ENCODE measurements at regions of chr4 and their contacts with region 1.

Region 1: DNA sequence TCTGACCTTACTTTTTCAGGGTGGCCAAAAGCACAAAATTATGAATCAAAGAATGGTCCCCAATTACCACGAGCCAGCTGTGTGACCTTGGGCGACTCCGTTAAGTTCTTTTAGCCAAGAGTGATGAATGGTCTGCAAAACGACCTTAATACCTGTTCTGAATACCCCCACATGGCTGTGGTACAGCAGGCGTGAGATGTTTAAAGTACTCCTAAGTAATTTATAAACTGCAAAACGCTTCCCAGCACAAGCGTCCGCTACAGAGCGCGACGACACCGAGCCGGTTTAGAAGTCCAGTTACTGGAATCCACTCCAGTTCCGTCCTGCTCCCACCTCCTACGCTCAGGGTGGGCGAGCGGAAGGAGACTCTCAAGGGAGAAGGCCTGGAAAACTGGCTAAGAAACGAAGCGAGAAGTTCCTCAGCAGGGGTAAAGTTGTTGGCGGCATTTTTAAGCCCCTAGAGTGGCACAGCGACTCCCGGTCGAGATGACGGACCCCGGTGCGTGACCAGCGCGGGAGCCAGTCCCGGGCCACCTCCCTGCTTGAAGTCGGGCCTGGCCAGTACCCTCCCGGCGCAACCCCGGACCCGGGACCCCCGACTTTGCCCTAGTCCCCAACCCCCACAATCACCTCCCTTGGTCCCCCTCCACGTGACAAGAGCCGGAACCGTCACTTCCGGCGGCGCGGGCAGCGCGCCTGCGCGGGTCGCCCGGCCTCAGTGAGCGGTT is 683 bp upstream of the BMP2K start:
- DNase-seq: peak; percentile 94
- ATAC-seq: peak; percentile 63
- H3K4me3 ChIP-seq: peak overlapping the region; percentile 79 to 99 (median 99)
- H3K4me3 Mint-ChIP-seq: peak overlapping the region; percentile 96
- H3K27ac ChIP-seq: peak overlapping the region; percentile 98 to 100
- H3K27ac Mint-ChIP-seq: peak overlapping the region; percentile 97
- H3K4me1 ChIP-seq: peaks cover 30 to 35% of the 10 kb centered on the region in 2 donors
- H3K4me1 Mint-ChIP-seq: peaks cover 21% of the 10 kb centered on the region
- H3K27me3 ChIP-seq: no peaks in the 10 kb centered on the region
- H3K27me3 Mint-ChIP-seq: no peaks in the 10 kb centered on the region
- CTCF ChIP-seq: no peak

Region 2: GRCh38 chr4:77075869-77076799 is 1699.3 kb before region 1 on chr4 and contains the start of gene CCNI:
- CTCF ChIA-PET with region 1: no interaction called
- POLR2A ChIA-PET with region 1: no interaction called
- intact Hi-C with region 1: loop called (anchors 10 kb)
- DNase-seq: peak; percentile 100
- ATAC-seq: peak; percentile 75
- H3K4me3 ChIP-seq: peak within 1 kb of the TSS; percentile 68 to 98 (median 81)
- H3K4me3 Mint-ChIP-seq: no peak within 1 kb of the TSS
- H3K27ac ChIP-seq: peak within 1 kb of the TSS; percentile 97 to 100
- H3K27ac Mint-ChIP-seq: peak within 1 kb of the TSS; percentile 100
- H3K4me1 ChIP-seq: peaks cover 48 to 52% of the 10 kb centered on the region in 2 donors
- H3K4me1 Mint-ChIP-seq: peaks cover 46% of the 10 kb centered on the region
- H3K27me3 ChIP-seq: no peaks in the 10 kb centered on the region
- H3K27me3 Mint-ChIP-seq: no peaks in the 10 kb centered on the region
- CTCF ChIP-seq: no peak
- total RNA-seq, gene CCNI: 314 and 328 TPM in 2 replicates

Region 3: DNA sequence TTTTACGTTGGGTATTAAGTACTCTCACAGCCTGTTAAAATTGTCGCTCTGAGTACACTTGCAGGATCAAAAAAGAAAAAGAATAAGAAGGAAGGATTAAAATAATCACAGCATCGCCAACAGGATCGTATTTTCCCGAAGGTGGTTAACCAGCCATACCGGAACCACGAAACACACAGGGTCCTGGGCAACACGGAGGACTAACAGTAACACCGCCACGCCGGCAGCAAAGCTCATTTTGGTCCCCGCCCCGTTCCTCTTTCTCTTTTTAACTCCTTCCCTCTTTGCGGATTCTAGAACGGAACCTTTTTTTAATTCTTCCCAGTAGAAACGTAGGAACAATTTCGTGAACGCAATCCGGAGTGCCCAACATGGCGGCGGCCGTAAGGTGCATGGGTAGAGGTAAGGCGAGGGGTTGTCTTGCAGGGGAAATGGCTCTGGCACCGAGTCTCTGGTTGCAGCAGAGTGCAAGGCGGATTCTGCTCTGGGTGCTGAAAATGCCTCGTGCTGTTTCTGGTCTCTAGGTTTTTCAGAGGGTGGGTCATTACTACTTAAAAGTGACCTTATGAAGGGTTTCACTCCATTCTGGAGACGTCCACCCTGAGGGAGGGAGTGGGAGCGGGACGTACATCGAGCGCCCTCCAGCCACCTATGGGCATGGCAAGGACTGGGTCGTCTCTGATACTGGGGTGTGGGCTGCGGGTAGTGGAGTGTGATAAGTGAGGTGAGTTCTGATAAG is 912.8 kb before region 1 on chr4 and contains the start of gene MRPL1:
- CTCF ChIA-PET with region 1: no interaction called
- POLR2A ChIA-PET with region 1: no interaction called
- intact Hi-C with region 1: loop called (anchors 5 kb)
- DNase-seq: peak; percentile 95
- ATAC-seq: peak; percentile 86
- H3K4me3 ChIP-seq: peak within 1 kb of the TSS; percentile 68 to 98 (median 80)
- H3K4me3 Mint-ChIP-seq: peak within 1 kb of the TSS; percentile 99
- H3K27ac ChIP-seq: peak within 1 kb of the TSS; percentile 99 to 100
- H3K27ac Mint-ChIP-seq: peak within 1 kb of the TSS; percentile 98
- H3K4me1 ChIP-seq: peaks cover 17 to 21% of the 10 kb centered on the region in 2 donors
- H3K4me1 Mint-ChIP-seq: peaks cover 41% of the 10 kb centered on the region
- H3K27me3 ChIP-seq: no peaks in the 10 kb centered on the region
- H3K27me3 Mint-ChIP-seq: no peaks in the 10 kb centered on the region
- CTCF ChIP-seq: no peak
- total RNA-seq, gene MRPL1: 22.7 and 23.3 TPM in 2 replicates

Region 4: GRCh38 chr4:78644744-78645330 is 130.6 kb before region 1 on chr4:
- CTCF ChIA-PET with region 1: interaction called, 14 read pairs
- POLR2A ChIA-PET with region 1: interaction called, 3 read pairs
- intact Hi-C with region 1: loop called (anchors 1 kb)
- DNase-seq: peak; percentile 84
- ATAC-seq: peak; percentile 96
- H3K4me3 ChIP-seq: no peak overlapping the region
- H3K4me3 Mint-ChIP-seq: peak overlapping the region; percentile 29
- H3K27ac ChIP-seq: peak overlapping the region in 1 of 2 donors; percentile 53
- H3K27ac Mint-ChIP-seq: peak overlapping the region; percentile 57
- H3K4me1 ChIP-seq: peaks cover 62 to 73% of the 10 kb centered on the region in 2 donors
- H3K4me1 Mint-ChIP-seq: peaks cover 67% of the 10 kb centered on the region
- H3K27me3 ChIP-seq: no peaks in the 10 kb centered on the region
- H3K27me3 Mint-ChIP-seq: no peaks in the 10 kb centered on the region
- CTCF ChIP-seq: peak; percentile 88

Region 5: GRCh38 chr4:78737035-78737434 is 38.4 kb before region 1 on chr4:
- CTCF ChIA-PET with region 1: interaction called, 3 read pairs
- POLR2A ChIA-PET with region 1: interaction called, 11 read pairs
- intact Hi-C with region 1: loop called (anchors 5 kb)
- DNase-seq: no peak
- ATAC-seq: peak; percentile 32
- H3K4me3 ChIP-seq: no peak overlapping the region
- H3K4me3 Mint-ChIP-seq: peak overlapping the region; percentile 16
- H3K27ac ChIP-seq: peak overlapping the region; percentile 24 to 67
- H3K27ac Mint-ChIP-seq: peak overlapping the region; percentile 90
- H3K4me1 ChIP-seq: peaks cover 41 to 49% of the 10 kb centered on the region in 2 donors
- H3K4me1 Mint-ChIP-seq: peaks cover 60% of the 10 kb centered on the region
- H3K27me3 ChIP-seq: no peaks in the 10 kb centered on the region
- H3K27me3 Mint-ChIP-seq: no peaks in the 10 kb centered on the region
- CTCF ChIP-seq: no peak

Region 6: GRCh38 chr4:78749972-78750727 is 25.3 kb before region 1 on chr4:
- CTCF ChIA-PET with region 1: interaction called, 3 read pairs
- POLR2A ChIA-PET with region 1: interaction called, 5 read pairs
- intact Hi-C with region 1: loop called (anchors 1 kb)
- DNase-seq: peak; percentile 85
- ATAC-seq: peak; percentile 82
- H3K4me3 ChIP-seq: peak overlapping the region in 1 of 5 experiments; percentile 48
- H3K4me3 Mint-ChIP-seq: peak overlapping the region; percentile 59
- H3K27ac ChIP-seq: peak overlapping the region; percentile 86 to 87
- H3K27ac Mint-ChIP-seq: peak overlapping the region; percentile 92
- H3K4me1 ChIP-seq: peaks cover 51 to 54% of the 10 kb centered on the region in 2 donors
- H3K4me1 Mint-ChIP-seq: peaks cover 63% of the 10 kb centered on the region
- H3K27me3 ChIP-seq: no peaks in the 10 kb centered on the region
- H3K27me3 Mint-ChIP-seq: no peaks in the 10 kb centered on the region
- CTCF ChIP-seq: no peak

Region 7: GRCh38 chr4:78864405-78865024 is 89.0 kb after region 1 on chr4:
- CTCF ChIA-PET with region 1: interaction called, 8 read pairs
- POLR2A ChIA-PET with region 1: no interaction called
- intact Hi-C with region 1: loop called (anchors 5 kb)
- DNase-seq: peak; percentile 84
- ATAC-seq: peak; percentile 73
- H3K4me3 ChIP-seq: no peak overlapping the region
- H3K4me3 Mint-ChIP-seq: peak overlapping the region; percentile 8
- H3K27ac ChIP-seq: no peak overlapping the region
- H3K27ac Mint-ChIP-seq: peak overlapping the region; percentile 46
- H3K4me1 ChIP-seq: peaks cover 6 to 7% of the 10 kb centered on the region in 2 donors
- H3K4me1 Mint-ChIP-seq: peaks cover 17% of the 10 kb centered on the region
- H3K27me3 ChIP-seq: no peaks in the 10 kb centered on the region
- H3K27me3 Mint-ChIP-seq: no peaks in the 10 kb centered on the region
- CTCF ChIP-seq: peak; percentile 84